Mammary epithelial cell (primary cell): ENCODE measurements at regions of chr3 and their contacts with region 1.

Region 1: GRCh38 chr3:121749276-121750086 is at the start of gene GOLGB1:
- DNase-seq: peak; percentile 100
- H3K4me3 ChIP-seq: peak within 1 kb of the TSS; percentile 71 to 95 (median 90)
- H3K27ac ChIP-seq: peak within 1 kb of the TSS; percentile 97
- H3K4me1 ChIP-seq: peaks cover 6% of the 10 kb centered on the region
- H3K27me3 ChIP-seq: no peaks in the 10 kb centered on the region
- CTCF ChIP-seq: peak in 1 of 2 donors; percentile 11
- total RNA-seq, gene GOLGB1: 44.2 to 51.0 TPM

Region 2: GRCh38 chr3:121718205-121718846 is 31.2 kb before region 1 on chr3:
- CTCF ChIA-PET with region 1: no interaction called
- dilution Hi-C with region 1: no loop called
- in situ Hi-C with region 1: no loop called
- intact Hi-C with region 1: no loop called
- DNase-seq: no peak
- H3K4me3 ChIP-seq: no peak overlapping the region
- H3K27ac ChIP-seq: no peak overlapping the region
- H3K4me1 ChIP-seq: no peaks in the 10 kb centered on the region
- H3K27me3 ChIP-seq: no peaks in the 10 kb centered on the region
- CTCF ChIP-seq: no peak

Region 3: DNA sequence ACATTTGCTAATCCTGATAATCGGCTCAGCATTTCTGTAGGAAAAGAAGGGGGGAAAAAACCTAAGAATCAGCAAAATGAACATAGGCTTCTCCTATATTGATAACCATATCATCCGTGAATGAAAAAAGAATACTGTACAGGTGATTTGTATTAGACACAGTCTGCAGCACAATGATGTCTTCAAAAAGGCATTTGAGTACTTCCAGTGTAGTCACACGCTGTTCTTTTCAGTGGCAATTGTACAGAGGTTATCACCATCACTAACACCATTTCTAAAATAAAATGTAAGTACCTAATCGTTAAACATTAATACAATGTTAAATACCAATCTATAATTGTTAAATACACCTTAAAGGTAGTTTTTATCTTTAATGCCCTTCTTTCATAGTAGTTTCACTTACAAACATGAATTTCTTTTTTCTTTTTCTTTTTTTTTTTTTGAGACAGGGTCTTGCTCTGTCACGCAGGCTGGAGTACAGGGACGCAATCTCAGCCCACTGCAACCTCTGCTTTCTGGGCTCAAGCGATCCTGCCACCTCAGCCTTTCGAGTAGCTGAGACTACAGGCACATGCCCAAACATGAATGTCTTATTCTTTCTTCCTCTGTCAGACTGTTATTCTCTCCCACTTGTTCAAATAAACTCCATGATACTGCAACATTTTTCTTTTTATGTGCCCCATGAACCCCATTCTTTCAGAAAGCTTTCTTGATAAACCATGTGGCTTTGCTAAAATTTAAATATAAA is 18.4 kb before region 1 on chr3:
- CTCF ChIA-PET with region 1: no interaction called
- dilution Hi-C with region 1: no loop called
- in situ Hi-C with region 1: no loop called
- intact Hi-C with region 1: loop called (anchors 2 kb)
- DNase-seq: peak; percentile 67
- H3K4me3 ChIP-seq: peak overlapping the region; percentile 3 to 43 (median 37)
- H3K27ac ChIP-seq: peak overlapping the region; percentile 85
- H3K4me1 ChIP-seq: peaks cover 23% of the 10 kb centered on the region
- H3K27me3 ChIP-seq: no peaks in the 10 kb centered on the region
- CTCF ChIP-seq: no peak

Region 4: GRCh38 chr3:121979734-121980449 is 230.4 kb after region 1 on chr3:
- CTCF ChIA-PET with region 1: no interaction called
- dilution Hi-C with region 1: no loop called
- in situ Hi-C with region 1: no loop called
- intact Hi-C with region 1: loop called (anchors 5 kb)
- DNase-seq: peak; percentile 69
- H3K4me3 ChIP-seq: peak overlapping the region in 2 of 3 experiments; percentile 26
- H3K27ac ChIP-seq: peak overlapping the region; percentile 46
- H3K4me1 ChIP-seq: peaks cover 37% of the 10 kb centered on the region
- H3K27me3 ChIP-seq: no peaks in the 10 kb centered on the region
- CTCF ChIP-seq: no peak